Breast epithelium (tissue), 4 donors: ENCODE measurements at regions of chr18 and their contacts with region 1.

Region 1: DNA sequence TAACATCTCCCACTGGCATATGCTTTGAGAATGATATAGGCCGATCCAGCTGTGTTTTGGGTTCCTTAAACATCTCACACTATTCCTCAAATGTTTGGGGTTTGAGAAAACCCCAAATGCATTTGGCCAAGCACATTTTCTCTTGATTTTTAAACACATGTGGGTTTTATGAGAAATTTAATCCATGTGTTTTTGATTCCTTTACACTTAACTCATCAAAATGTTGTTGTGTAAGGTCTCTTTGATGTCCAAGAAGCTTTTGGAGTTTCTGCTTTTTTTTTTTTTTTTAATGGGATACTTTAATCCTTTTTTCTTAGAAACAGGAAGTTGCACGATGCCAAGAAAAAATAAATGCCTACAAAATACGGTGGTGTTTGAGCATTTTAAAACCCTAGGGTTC is 339.8 kb upstream of the TCF4 start:
- DNase-seq: no peak
- H3K4me3 ChIP-seq: no peak overlapping the region
- H3K27ac ChIP-seq: no peak overlapping the region
- H3K4me1 ChIP-seq: no peaks in the 10 kb centered on the region
- H3K27me3 ChIP-seq: no peaks in the 10 kb centered on the region
- CTCF ChIP-seq: no peak
- POLR2A ChIP-seq: no peak

Region 2: DNA sequence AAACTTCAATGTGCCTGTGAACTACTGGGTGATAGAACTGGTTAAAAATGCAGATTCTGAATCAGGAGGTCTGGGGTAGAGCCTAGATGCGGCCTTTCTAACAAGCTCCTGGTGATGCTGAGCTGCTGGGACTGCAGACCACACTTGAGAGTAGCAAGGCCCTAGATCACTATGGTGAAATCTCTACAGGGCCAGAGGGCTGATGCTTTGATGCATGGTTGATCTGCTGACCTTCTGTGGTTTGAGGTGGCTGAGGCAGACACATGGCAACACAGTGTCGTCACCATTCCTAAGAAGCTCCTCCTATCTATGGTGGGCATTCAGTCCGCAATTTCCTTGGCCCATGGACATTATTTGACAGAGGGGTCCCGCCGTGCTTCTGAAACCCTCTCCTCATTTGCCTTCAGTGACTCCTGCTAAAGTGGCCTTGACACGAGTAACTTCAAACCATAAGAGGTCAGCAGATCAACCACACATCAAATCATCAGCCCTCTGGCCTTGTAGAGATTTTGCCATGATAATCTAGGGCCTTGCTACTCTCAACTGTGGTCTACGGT is 988.4 kb before region 1 on chr18:
- intact Hi-C with region 1: loop called (anchors 10 kb)
- DNase-seq: no peak
- H3K4me3 ChIP-seq: no peak overlapping the region
- H3K27ac ChIP-seq: no peak overlapping the region
- H3K4me1 ChIP-seq: no peaks in the 10 kb centered on the region
- H3K27me3 ChIP-seq: no peaks in the 10 kb centered on the region
- CTCF ChIP-seq: no peak
- POLR2A ChIP-seq: no peak

Region 3: GRCh38 chr18:56501896-56502295 is 574.1 kb after region 1 on chr18:
- intact Hi-C with region 1: no loop called
- DNase-seq: no peak
- H3K4me3 ChIP-seq: no peak overlapping the region
- H3K27ac ChIP-seq: no peak overlapping the region
- H3K4me1 ChIP-seq: no peaks in the 10 kb centered on the region
- H3K27me3 ChIP-seq: no peaks in the 10 kb centered on the region
- CTCF ChIP-seq: no peak
- POLR2A ChIP-seq: no peak